Naive thymus-derived CD4-positive, alpha-beta T cell (primary cell): ENCODE measurements at regions of chrX and their contacts with region 1.

Region 1: GRCh38 chrX:57595381-57595811 is 3.6 kb downstream of the ZXDB start:
- DNase-seq: no peak
- ATAC-seq: no peak
- H3K4me3 ChIP-seq: no peak overlapping the region
- H3K4me3 Mint-ChIP-seq: peak overlapping the region; percentile 6 to 87 (median 68)
- H3K27ac ChIP-seq: no peak overlapping the region
- H3K27ac Mint-ChIP-seq: peak overlapping the region in 5 of 9 donors; percentile 0 to 79 (median 50)
- H3K4me1 ChIP-seq: peaks cover 0 to 18% of the 10 kb centered on the region in 2 donors
- H3K4me1 Mint-ChIP-seq: peaks cover 8 to 54% (median 39%) of the 10 kb centered on the region in 7 donors
- H3K27me3 ChIP-seq: no peaks in the 10 kb centered on the region
- H3K27me3 Mint-ChIP-seq: no peaks in the 10 kb centered on the region

Region 2: DNA sequence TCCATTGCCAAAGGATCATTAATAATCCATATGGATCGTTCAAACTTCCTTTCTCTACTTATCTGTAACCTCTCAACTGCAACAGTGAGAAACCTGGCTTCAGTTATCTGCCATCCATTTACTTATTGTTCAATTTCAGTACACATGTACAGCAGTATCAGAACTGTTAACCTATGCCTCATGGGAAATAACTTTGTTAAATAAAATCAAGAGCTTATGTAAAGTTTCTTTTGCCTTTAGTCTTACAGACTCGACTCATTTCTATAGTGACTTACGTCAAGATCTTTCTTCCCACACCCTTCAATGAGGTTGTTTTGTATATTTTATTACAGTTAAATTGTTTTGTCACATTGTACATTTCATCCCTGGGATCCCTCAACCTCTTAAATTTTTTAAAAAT is 1020.5 kb before region 1 on chrX:
- CTCF ChIA-PET with region 1: no interaction called
- POLR2A ChIA-PET with region 1: no interaction called
- intact Hi-C with region 1: no loop called
- DNase-seq: no peak
- ATAC-seq: no peak
- H3K4me3 ChIP-seq: no peak overlapping the region
- H3K4me3 Mint-ChIP-seq: no peak overlapping the region
- H3K27ac ChIP-seq: no peak overlapping the region
- H3K27ac Mint-ChIP-seq: peak overlapping the region in 2 of 9 donors; percentile 41 to 84
- H3K4me1 ChIP-seq: no peaks in the 10 kb centered on the region
- H3K4me1 Mint-ChIP-seq: peaks cover 17 to 67% (median 49%) of the 10 kb centered on the region in 7 donors
- H3K27me3 ChIP-seq: no peaks in the 10 kb centered on the region
- H3K27me3 Mint-ChIP-seq: no peaks in the 10 kb centered on the region

Region 3: GRCh38 chrX:56995271-56995994 is 600.0 kb before region 1 on chrX and contains the start of gene SPIN3:
- CTCF ChIA-PET with region 1: no interaction called
- POLR2A ChIA-PET with region 1: no interaction called
- intact Hi-C with region 1: loop called in 1 of 2 experiments (anchors 10 kb)
- DNase-seq: peak; percentile 15 to 67 (median 48)
- ATAC-seq: peak; percentile 81
- H3K4me3 ChIP-seq: peak within 1 kb of the TSS; percentile 50
- H3K4me3 Mint-ChIP-seq: peak within 1 kb of the TSS; percentile 91 to 98 (median 95)
- H3K27ac ChIP-seq: peak within 1 kb of the TSS; percentile 42
- H3K27ac Mint-ChIP-seq: peak within 1 kb of the TSS; percentile 90 to 97 (median 93)
- H3K4me1 ChIP-seq: peaks cover 0 to 4% of the 10 kb centered on the region in 2 donors
- H3K4me1 Mint-ChIP-seq: peaks cover 11 to 58% (median 38%) of the 10 kb centered on the region in 7 donors
- H3K27me3 ChIP-seq: no peaks in the 10 kb centered on the region
- H3K27me3 Mint-ChIP-seq: no peaks in the 10 kb centered on the region
- total RNA-seq, gene SPIN3: 8.8 to 24.2 (median 13.5) TPM

Region 4: GRCh38 chrX:57121162-57121741 is 474.1 kb before region 1 on chrX and contains the start of gene SPIN2B:
- CTCF ChIA-PET with region 1: no interaction called
- POLR2A ChIA-PET with region 1: no interaction called
- intact Hi-C with region 1: loop called in 1 of 2 experiments (anchors 5 kb)
- DNase-seq: peak; percentile 27 to 76 (median 68)
- ATAC-seq: peak; percentile 99
- H3K4me3 ChIP-seq: peak within 1 kb of the TSS; percentile 57
- H3K4me3 Mint-ChIP-seq: peak within 1 kb of the TSS; percentile 90 to 95 (median 93)
- H3K27ac ChIP-seq: peak within 1 kb of the TSS; percentile 62
- H3K27ac Mint-ChIP-seq: peak within 1 kb of the TSS; percentile 72 to 96 (median 91)
- H3K4me1 ChIP-seq: no peaks in the 10 kb centered on the region
- H3K4me1 Mint-ChIP-seq: peaks cover 5 to 14% (median 11%) of the 10 kb centered on the region in 7 donors
- H3K27me3 ChIP-seq: no peaks in the 10 kb centered on the region
- H3K27me3 Mint-ChIP-seq: no peaks in the 10 kb centered on the region
- total RNA-seq, gene SPIN2B: 9.0 to 19.7 (median 14.0) TPM

Region 5: GRCh38 chrX:57294961-57295360 is 300.4 kb before region 1 on chrX:
- CTCF ChIA-PET with region 1: no interaction called
- POLR2A ChIA-PET with region 1: no interaction called
- intact Hi-C with region 1: no loop called
- DNase-seq: no peak
- ATAC-seq: no peak
- H3K4me3 ChIP-seq: no peak overlapping the region
- H3K4me3 Mint-ChIP-seq: peak overlapping the region in 6 of 10 donors; percentile 1 to 64 (median 40)
- H3K27ac ChIP-seq: no peak overlapping the region
- H3K27ac Mint-ChIP-seq: peak overlapping the region in 5 of 9 donors; percentile 29 to 67 (median 41)
- H3K4me1 ChIP-seq: no peaks in the 10 kb centered on the region
- H3K4me1 Mint-ChIP-seq: peaks cover 5 to 52% (median 43%) of the 10 kb centered on the region in 7 donors
- H3K27me3 ChIP-seq: no peaks in the 10 kb centered on the region
- H3K27me3 Mint-ChIP-seq: no peaks in the 10 kb centered on the region

Region 6: GRCh38 chrX:57906790-57907189 is 311.4 kb after region 1 on chrX:
- CTCF ChIA-PET with region 1: no interaction called
- POLR2A ChIA-PET with region 1: no interaction called
- intact Hi-C with region 1: loop called (anchors 1 to 2 kb)
- DNase-seq: no peak
- ATAC-seq: no peak
- H3K4me3 ChIP-seq: no peak overlapping the region
- H3K4me3 Mint-ChIP-seq: peak overlapping the region in 8 of 10 donors; percentile 5 to 80 (median 57)
- H3K27ac ChIP-seq: no peak overlapping the region
- H3K27ac Mint-ChIP-seq: peak overlapping the region in 3 of 9 donors; percentile 42 to 65 (median 64)
- H3K4me1 ChIP-seq: peaks cover 5 to 6% of the 10 kb centered on the region in 2 donors
- H3K4me1 Mint-ChIP-seq: peaks cover 7 to 47% (median 36%) of the 10 kb centered on the region in 7 donors
- H3K27me3 ChIP-seq: no peaks in the 10 kb centered on the region
- H3K27me3 Mint-ChIP-seq: no peaks in the 10 kb centered on the region